MCF 10A (cell line): ENCODE measurements at regions of chr5 and their contacts with region 1.

Region 1: GRCh38 chr5:123423278-123424149 is at the start of gene CEP120:
- DNase-seq: peak; percentile 100
- H3K4me3 Mint-ChIP-seq: no peak within 1 kb of the TSS
- H3K27ac Mint-ChIP-seq: no peak within 1 kb of the TSS
- H3K4me1 Mint-ChIP-seq: peaks cover 15% of the 10 kb centered on the region
- H3K27me3 Mint-ChIP-seq: no peaks in the 10 kb centered on the region
- CTCF ChIP-seq: peak; percentile 87
- total RNA-seq, gene CEP120: 49.8 and 54.5 TPM in 2 replicates

Region 2: GRCh38 chr5:122421374-122422079 is 1002.0 kb before region 1 on chr5:
- CTCF ChIA-PET with region 1: no interaction called
- POLR2A ChIA-PET with region 1: no interaction called
- intact Hi-C with region 1: no loop called
- DNase-seq: no peak
- H3K4me3 Mint-ChIP-seq: no peak overlapping the region
- H3K27ac Mint-ChIP-seq: no peak overlapping the region
- H3K4me1 Mint-ChIP-seq: no peaks in the 10 kb centered on the region
- H3K27me3 Mint-ChIP-seq: no peaks in the 10 kb centered on the region
- CTCF ChIP-seq: no peak

Region 3: DNA sequence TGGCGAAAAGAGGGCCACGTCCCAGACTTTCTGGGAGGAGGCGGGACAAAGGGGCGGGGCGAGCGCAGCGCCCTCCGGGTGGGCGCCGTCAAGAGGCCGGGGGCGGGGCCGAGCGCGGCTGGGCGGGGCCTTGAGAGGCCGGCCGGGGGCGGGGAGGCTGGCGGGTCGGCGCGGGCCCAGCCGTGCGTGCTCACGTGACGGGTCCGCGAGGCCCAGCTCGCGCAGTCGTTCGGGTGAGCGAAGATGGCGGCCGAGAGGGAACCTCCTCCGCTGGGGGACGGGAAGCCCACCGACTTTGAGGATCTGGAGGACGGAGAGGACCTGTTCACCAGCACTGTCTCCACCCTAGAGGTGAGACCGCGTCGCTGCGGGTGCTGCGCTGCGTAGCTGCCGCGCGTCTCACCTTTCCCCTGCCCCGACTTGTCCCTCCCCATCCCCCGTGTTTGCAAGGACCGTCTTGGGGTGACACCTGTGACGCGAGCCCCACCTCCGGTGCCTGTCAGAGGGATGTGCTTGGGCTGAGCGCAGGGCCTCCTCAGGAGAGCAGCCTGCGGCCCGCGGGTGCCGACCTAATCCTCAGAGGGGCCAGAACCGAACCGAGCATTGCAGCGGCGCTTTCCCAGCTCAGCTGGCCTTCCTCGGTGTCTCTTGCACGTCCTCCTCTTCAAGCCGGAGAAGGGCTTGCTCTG is 648.5 kb before region 1 on chr5 and contains the start of gene SNX2:
- CTCF ChIA-PET with region 1: no interaction called
- POLR2A ChIA-PET with region 1: interaction called, 14 read pairs
- intact Hi-C with region 1: no loop called
- DNase-seq: peak; percentile 92
- H3K4me3 Mint-ChIP-seq: peak within 1 kb of the TSS; percentile 94
- H3K27ac Mint-ChIP-seq: peak within 1 kb of the TSS; percentile 95
- H3K4me1 Mint-ChIP-seq: peaks cover 30% of the 10 kb centered on the region
- H3K27me3 Mint-ChIP-seq: no peaks in the 10 kb centered on the region
- CTCF ChIP-seq: peak; percentile 32
- total RNA-seq, gene SNX2: 94.9 and 120 TPM in 2 replicates

Region 4: DNA sequence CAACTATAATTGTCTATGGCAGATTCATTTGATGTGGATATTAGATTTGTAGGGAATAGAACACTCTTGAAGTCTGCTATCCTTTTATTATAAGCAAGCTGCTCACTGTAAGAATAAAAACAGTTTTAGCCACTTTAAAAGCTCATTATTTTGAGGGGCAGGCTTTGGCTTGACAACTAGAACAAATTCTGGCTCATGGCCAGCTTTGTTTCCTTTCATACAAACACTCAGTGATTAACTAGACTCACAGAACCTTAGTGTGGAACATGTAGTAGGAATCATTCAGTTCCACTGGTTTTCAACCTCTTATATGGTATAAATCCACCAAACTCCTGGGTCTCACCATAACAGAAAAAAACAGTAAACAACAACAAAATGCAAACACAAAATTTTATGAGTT is 27.1 kb after region 1 on chr5:
- CTCF ChIA-PET with region 1: interaction called, 16 read pairs
- POLR2A ChIA-PET with region 1: interaction called, 29 read pairs
- intact Hi-C with region 1: no loop called
- DNase-seq: peak; percentile 62
- H3K4me3 Mint-ChIP-seq: no peak overlapping the region
- H3K27ac Mint-ChIP-seq: no peak overlapping the region
- H3K4me1 Mint-ChIP-seq: peaks cover 27% of the 10 kb centered on the region
- H3K27me3 Mint-ChIP-seq: no peaks in the 10 kb centered on the region
- CTCF ChIP-seq: no peak

Region 5: DNA sequence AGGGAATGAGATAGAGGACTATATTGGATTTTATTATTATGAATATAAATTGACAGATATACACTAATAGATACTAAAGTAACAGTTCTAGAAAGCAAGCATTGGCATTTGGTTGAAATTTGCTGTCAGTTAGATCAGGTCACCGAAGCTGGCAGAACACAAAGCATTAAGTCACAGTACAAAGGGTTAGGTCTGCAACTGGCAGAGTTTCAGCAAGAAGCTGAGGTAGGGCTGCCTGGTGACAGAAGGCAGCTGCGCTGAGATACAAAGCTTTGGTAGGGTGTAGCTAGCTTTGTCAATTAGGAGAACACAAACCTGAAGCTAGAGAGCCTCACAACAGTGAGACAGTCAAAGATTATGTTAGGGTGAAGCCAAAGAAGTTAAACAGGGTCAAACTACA is 82.1 kb after region 1 on chr5:
- CTCF ChIA-PET with region 1: interaction called, 18 read pairs
- POLR2A ChIA-PET with region 1: interaction called, 418 read pairs
- intact Hi-C with region 1: no loop called
- DNase-seq: no peak
- H3K4me3 Mint-ChIP-seq: no peak overlapping the region
- H3K27ac Mint-ChIP-seq: no peak overlapping the region
- H3K4me1 Mint-ChIP-seq: peaks cover 2% of the 10 kb centered on the region
- H3K27me3 Mint-ChIP-seq: no peaks in the 10 kb centered on the region
- CTCF ChIP-seq: no peak

Region 6: GRCh38 chr5:123538670-123539459 is 115.4 kb after region 1 on chr5:
- CTCF ChIA-PET with region 1: interaction called, 12 read pairs
- POLR2A ChIA-PET with region 1: interaction called, 72 read pairs
- intact Hi-C with region 1: no loop called
- DNase-seq: peak; percentile 27
- H3K4me3 Mint-ChIP-seq: no peak overlapping the region
- H3K27ac Mint-ChIP-seq: peak overlapping the region; percentile 76
- H3K4me1 Mint-ChIP-seq: peaks cover 38% of the 10 kb centered on the region
- H3K27me3 Mint-ChIP-seq: no peaks in the 10 kb centered on the region
- CTCF ChIP-seq: no peak

Region 7: GRCh38 chr5:123585871-123586270 is 162.4 kb after region 1 on chr5:
- CTCF ChIA-PET with region 1: interaction called, 4 read pairs
- POLR2A ChIA-PET with region 1: interaction called, 11 read pairs
- intact Hi-C with region 1: no loop called
- DNase-seq: no peak
- H3K4me3 Mint-ChIP-seq: no peak overlapping the region
- H3K27ac Mint-ChIP-seq: no peak overlapping the region
- H3K4me1 Mint-ChIP-seq: peaks cover 6% of the 10 kb centered on the region
- H3K27me3 Mint-ChIP-seq: no peaks in the 10 kb centered on the region
- CTCF ChIP-seq: no peak

Region 8: GRCh38 chr5:124599028-124599973 is 1175.8 kb after region 1 on chr5:
- CTCF ChIA-PET with region 1: no interaction called
- POLR2A ChIA-PET with region 1: no interaction called
- intact Hi-C with region 1: no loop called
- DNase-seq: peak; percentile 45
- H3K4me3 Mint-ChIP-seq: peak overlapping the region; percentile 10
- H3K27ac Mint-ChIP-seq: peak overlapping the region; percentile 78
- H3K4me1 Mint-ChIP-seq: peaks cover 23% of the 10 kb centered on the region
- H3K27me3 Mint-ChIP-seq: no peaks in the 10 kb centered on the region
- CTCF ChIP-seq: no peak